ENCODE measurements at regions of chr4 and their contacts with region 1.

Region 1: GRCh38 chr4:13484122-13484748 is at the start of gene RAB28:
- DNase-seq: peak; percentile 98
- H3K4me3 Mint-ChIP-seq: peak within 1 kb of the TSS; percentile 96
- H3K27ac Mint-ChIP-seq: peak within 1 kb of the TSS; percentile 100
- H3K4me1 Mint-ChIP-seq: peaks cover 21% of the 10 kb centered on the region
- H3K27me3 Mint-ChIP-seq: peaks cover 14% of the 10 kb centered on the region
- total RNA-seq, gene RAB28: 19.5 and 20.5 TPM in 2 replicates

Region 2: GRCh38 chr4:13452927-13453579 is 31.2 kb before region 1 on chr4:
- intact Hi-C with region 1: loop called (anchors 2 kb)
- DNase-seq: no peak
- H3K4me3 Mint-ChIP-seq: peak overlapping the region; percentile 59
- H3K27ac Mint-ChIP-seq: peak overlapping the region; percentile 80
- H3K4me1 Mint-ChIP-seq: peaks cover 17% of the 10 kb centered on the region
- H3K27me3 Mint-ChIP-seq: no peaks in the 10 kb centered on the region

Region 3: GRCh38 chr4:13627606-13628301 is 143.5 kb after region 1 on chr4 and contains the start of gene BOD1L1:
- intact Hi-C with region 1: loop called (anchors 2 kb)
- DNase-seq: peak; percentile 95
- H3K4me3 Mint-ChIP-seq: peak within 1 kb of the TSS; percentile 97
- H3K27ac Mint-ChIP-seq: peak within 1 kb of the TSS; percentile 99
- H3K4me1 Mint-ChIP-seq: peaks cover 13% of the 10 kb centered on the region
- H3K27me3 Mint-ChIP-seq: no peaks in the 10 kb centered on the region
- total RNA-seq, gene BOD1L1: 38.3 and 41.0 TPM in 2 replicates